ENCODE measurements at regions of chr13 and their contacts with region 1.

Region 1: GRCh38 chr13:18952225-18953016 is 229.2 kb downstream of the TUBA3C start:
- DNase-seq: no peak
- ATAC-seq: no peak
- H3K4me3 ChIP-seq: no peak overlapping the region
- H3K4me3 Mint-ChIP-seq: no peak overlapping the region
- H3K27ac ChIP-seq: no peak overlapping the region
- H3K27ac Mint-ChIP-seq: no peak overlapping the region
- H3K4me1 ChIP-seq: no peaks in the 10 kb centered on the region
- H3K4me1 Mint-ChIP-seq: no peaks in the 10 kb centered on the region
- H3K27me3 ChIP-seq: no peaks in the 10 kb centered on the region
- H3K27me3 Mint-ChIP-seq: no peaks in the 10 kb centered on the region
- CTCF ChIP-seq: no peak

Region 2: DNA sequence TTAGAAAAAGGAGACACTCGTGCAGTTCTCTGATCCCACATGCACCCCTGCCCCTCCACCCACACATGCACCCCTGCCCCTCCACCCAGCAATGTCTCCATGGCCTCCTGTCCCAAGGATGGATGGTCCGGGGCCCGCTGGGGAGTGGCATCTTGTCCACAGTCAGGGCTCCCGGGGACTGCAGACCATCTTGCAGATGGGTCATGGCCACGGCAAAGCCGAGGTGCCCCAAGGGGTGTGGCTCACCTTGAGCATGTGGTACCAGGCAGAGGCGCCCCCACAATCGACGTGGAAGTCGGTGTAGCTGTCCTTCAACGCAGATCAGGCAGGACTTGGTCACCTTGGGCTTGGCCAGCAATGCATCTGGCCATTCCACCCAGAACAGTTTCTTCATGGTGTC is 12.5 kb after region 1 on chr13:
- CTCF ChIA-PET with region 1: no interaction called
- POLR2A ChIA-PET with region 1: no interaction called
- intact Hi-C with region 1: loop called in 1 of 2 experiments (anchors 1 kb)
- DNase-seq: no peak
- ATAC-seq: no peak
- H3K4me3 ChIP-seq: no peak overlapping the region
- H3K4me3 Mint-ChIP-seq: no peak overlapping the region
- H3K27ac ChIP-seq: no peak overlapping the region
- H3K27ac Mint-ChIP-seq: no peak overlapping the region
- H3K4me1 ChIP-seq: no peaks in the 10 kb centered on the region
- H3K4me1 Mint-ChIP-seq: no peaks in the 10 kb centered on the region
- H3K27me3 ChIP-seq: no peaks in the 10 kb centered on the region
- H3K27me3 Mint-ChIP-seq: no peaks in the 10 kb centered on the region
- CTCF ChIP-seq: no peak

Measured in CD8-positive, alpha-beta T cell (primary cell).